Activated CD4-positive, alpha-beta T cell treated with anti-CD3 and anti-CD28 coated beads, Interleukin-2, amount 10 ng/mL, durations not matched to agents 24 days and 14 days (primary cell): ENCODE measurements at regions of chr10 and their contacts with region 1.

Region 1: DNA sequence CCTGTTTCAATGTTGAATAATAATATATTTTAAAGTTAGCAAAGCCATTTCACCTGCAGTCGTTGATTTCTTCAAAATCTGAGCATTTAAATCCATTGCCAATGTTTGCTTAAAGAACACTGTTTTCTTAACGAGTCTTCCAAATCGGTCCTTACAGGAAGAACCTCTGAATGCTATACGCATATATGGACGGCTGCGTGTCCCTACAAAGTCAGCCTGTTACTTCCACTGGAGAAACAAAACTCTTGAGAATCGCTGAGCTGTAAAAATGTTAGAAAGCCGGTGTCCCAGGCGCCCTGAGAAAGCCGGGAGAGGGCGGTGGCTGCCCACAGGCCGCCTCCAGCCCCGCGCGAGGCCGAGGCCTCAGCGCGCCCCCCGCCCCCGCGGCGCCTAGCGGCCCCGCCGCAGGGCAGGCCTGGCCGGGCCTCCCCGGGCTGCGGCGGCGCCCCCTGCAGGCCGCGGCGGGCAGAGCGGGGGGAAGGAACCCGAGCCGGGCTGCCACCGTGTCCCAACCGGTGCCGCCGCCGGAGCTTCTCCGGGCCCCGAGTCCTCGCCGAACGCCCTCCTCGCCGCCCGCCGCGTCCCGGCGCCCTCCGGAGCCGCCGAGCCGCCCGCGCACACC is at the start of gene FHIP2A:
- DNase-seq: peak; percentile 97
- H3K4me3 Mint-ChIP-seq: peak within 1 kb of the TSS; percentile 91
- H3K27ac Mint-ChIP-seq: peak within 1 kb of the TSS; percentile 96
- H3K4me1 Mint-ChIP-seq: peaks cover 31% of the 10 kb centered on the region
- H3K27me3 Mint-ChIP-seq: peaks cover 21% of the 10 kb centered on the region
- total RNA-seq, gene FHIP2A: 24.2 and 24.7 TPM in 2 replicates

Region 2: DNA sequence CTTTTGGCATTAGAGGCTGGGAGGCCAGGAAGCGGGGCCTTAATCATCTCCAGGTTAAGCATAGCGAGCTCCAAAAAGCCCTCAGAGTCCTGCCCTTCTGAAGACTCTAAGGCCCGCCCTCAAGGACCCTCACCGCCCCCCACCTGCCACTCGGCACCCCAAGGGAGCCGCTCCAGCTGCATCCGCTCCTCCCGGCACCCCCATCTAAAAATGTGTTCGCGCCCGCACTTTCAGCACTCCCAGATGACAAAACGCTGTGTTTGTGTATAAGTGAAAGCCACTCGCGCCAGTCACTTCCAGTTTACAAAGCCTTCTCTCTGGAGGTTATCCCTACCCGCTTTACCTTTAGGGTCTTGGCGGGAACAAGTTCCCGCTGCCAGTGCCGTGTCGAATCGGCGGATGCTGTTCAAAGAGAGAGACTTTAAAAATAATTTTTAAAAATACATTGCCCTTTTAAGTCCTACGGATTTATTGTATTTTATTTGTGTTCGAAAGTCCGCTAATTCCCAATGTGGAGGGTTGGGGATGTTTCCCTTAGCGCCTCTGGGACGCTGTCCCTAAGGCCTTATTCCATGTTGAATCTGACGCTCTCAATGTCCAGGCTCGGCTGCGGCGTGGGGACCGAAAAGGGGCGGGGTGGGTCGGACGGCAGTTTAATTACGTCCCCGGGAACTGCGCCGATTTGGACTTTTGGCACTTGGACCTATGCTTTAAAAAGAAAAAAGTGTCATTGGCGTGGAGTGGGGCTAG is 967.2 kb before region 1 on chr10 and contains the starts of genes DCLRE1A and NHLRC2:
- intact Hi-C with region 1: no loop called
- DNase-seq: peak; percentile 87
- H3K4me3 Mint-ChIP-seq: peak within 1 kb of the TSS; percentile 98
- H3K27ac Mint-ChIP-seq: peak within 1 kb of the TSS; percentile 95
- H3K4me1 Mint-ChIP-seq: peaks cover 33% of the 10 kb centered on the region
- H3K27me3 Mint-ChIP-seq: no peaks in the 10 kb centered on the region
- total RNA-seq, gene DCLRE1A: 14.4 and 14.6 TPM in 2 replicates
- total RNA-seq, gene NHLRC2: 23.6 and 27.2 TPM in 2 replicates

Region 3: GRCh38 chr10:114526504-114527238 is 294.7 kb before region 1 on chr10:
- intact Hi-C with region 1: loop called (anchors 2 kb)
- DNase-seq: peak; percentile 97
- H3K4me3 Mint-ChIP-seq: peak overlapping the region; percentile 78
- H3K27ac Mint-ChIP-seq: peak overlapping the region; percentile 97
- H3K4me1 Mint-ChIP-seq: peaks cover 53% of the 10 kb centered on the region
- H3K27me3 Mint-ChIP-seq: no peaks in the 10 kb centered on the region

Region 4: DNA sequence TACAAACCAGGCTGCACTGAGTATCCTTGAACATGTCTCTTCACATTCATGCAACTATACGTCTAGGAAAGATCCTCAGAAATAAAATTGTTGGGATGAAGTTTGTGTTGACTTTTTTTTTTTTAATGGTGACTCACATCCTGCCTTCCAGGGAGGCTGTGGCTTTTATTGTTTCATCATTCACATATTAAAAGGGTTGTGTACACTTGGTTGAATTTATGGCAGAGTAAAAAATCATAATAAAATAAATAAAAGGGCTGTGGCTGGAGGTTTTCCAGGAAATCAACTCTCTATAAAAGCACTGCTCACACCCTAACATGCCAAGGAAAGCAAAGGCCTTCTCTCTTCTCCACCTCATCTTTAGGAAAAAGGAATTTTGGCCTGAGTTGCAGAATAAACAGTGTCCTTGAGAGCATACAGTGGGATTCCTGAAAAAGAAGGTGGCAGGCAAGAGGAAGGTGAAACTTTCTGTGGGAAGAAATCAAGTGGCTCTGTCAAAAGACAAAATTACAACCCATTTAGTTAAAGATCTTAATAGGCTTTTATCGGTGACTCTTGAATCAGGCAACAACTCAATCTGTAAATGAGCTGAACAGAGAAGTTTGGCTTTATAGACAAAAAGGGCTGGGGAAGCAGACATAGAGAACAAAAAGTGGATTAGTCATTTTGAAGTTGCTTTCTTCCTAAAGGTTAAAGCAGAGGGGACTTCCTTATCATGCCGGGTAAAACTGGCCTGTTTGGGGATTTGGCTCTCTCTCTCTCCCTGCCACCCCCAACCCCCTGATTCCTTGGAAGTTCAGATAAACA is 41.4 kb before region 1 on chr10:
- intact Hi-C with region 1: no loop called
- DNase-seq: no peak
- H3K4me3 Mint-ChIP-seq: no peak overlapping the region
- H3K27ac Mint-ChIP-seq: no peak overlapping the region
- H3K4me1 Mint-ChIP-seq: peaks cover 10% of the 10 kb centered on the region
- H3K27me3 Mint-ChIP-seq: peaks cover 27% of the 10 kb centered on the region

Region 5: GRCh38 chr10:114801411-114801813 is 20.0 kb before region 1 on chr10:
- intact Hi-C with region 1: loop called (anchors 2 kb)
- DNase-seq: peak; percentile 83
- H3K4me3 Mint-ChIP-seq: peak overlapping the region; percentile 74
- H3K27ac Mint-ChIP-seq: peak overlapping the region; percentile 82
- H3K4me1 Mint-ChIP-seq: peaks cover 34% of the 10 kb centered on the region
- H3K27me3 Mint-ChIP-seq: no peaks in the 10 kb centered on the region

Region 6: GRCh38 chr10:114810926-114811325 is 10.5 kb before region 1 on chr10:
- intact Hi-C with region 1: loop called (anchors 1 kb)
- DNase-seq: peak; percentile 71
- H3K4me3 Mint-ChIP-seq: peak overlapping the region; percentile 48
- H3K27ac Mint-ChIP-seq: peak overlapping the region; percentile 78
- H3K4me1 Mint-ChIP-seq: peaks cover 23% of the 10 kb centered on the region
- H3K27me3 Mint-ChIP-seq: peaks cover 2% of the 10 kb centered on the region

Region 7: GRCh38 chr10:114856544-114857282 is 35.3 kb after region 1 on chr10:
- intact Hi-C with region 1: loop called (anchors 2 kb)
- DNase-seq: peak; percentile 59
- H3K4me3 Mint-ChIP-seq: peak overlapping the region; percentile 44
- H3K27ac Mint-ChIP-seq: peak overlapping the region; percentile 56
- H3K4me1 Mint-ChIP-seq: peaks cover 23% of the 10 kb centered on the region
- H3K27me3 Mint-ChIP-seq: no peaks in the 10 kb centered on the region

Region 8: DNA sequence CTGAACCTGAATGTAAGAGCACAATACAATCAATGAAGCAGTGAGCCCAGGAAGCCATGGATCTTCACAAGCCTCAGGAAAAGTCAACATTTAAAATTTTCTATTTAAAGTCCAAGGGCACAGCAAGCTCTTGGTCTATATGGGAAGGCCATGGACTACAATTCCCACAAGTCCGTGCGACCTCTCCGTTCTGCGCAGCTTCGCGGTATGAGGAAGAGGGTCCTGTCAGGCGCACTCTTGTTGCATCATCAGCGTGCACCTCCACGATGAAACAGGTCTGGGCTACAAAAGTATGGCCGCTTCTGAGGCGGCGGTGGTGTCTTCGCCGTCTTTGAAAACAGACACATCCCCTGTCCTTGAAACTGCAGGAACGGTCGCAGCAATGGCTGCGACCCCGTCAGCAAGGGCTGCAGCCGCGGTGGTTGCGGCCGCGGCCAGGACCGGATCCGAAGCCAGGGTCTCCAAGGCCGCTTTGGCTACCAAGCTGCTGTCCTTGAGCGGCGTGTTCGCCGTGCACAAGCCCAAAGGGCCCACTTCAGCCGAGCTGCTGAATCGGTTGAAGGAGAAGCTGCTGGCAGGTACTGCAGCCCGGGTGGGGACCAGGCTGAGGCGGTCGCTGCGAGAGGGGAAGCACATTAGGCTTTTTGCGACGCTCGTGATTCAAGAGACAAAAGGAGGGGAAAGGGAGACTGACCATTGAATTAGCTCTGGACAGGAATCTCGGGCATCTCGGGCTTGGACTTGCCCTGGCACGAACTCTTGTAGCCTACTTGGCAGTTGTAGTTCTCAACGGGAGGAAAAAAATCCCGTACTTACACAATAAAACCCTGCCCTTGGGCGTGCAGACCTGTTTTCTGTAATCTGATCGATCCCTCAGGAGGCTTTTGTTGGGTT is 116.8 kb after region 1 on chr10 and contains the start of gene TRUB1:
- intact Hi-C with region 1: loop called (anchors 2 kb)
- DNase-seq: peak; percentile 96
- H3K4me3 Mint-ChIP-seq: peak within 1 kb of the TSS; percentile 94
- H3K27ac Mint-ChIP-seq: peak within 1 kb of the TSS; percentile 94
- H3K4me1 Mint-ChIP-seq: peaks cover 31% of the 10 kb centered on the region
- H3K27me3 Mint-ChIP-seq: no peaks in the 10 kb centered on the region
- total RNA-seq, gene TRUB1: 18.5 and 20.9 TPM in 2 replicates